Aorta (tissue), 5 donors: ENCODE measurements at regions of chr5 and their contacts with region 1.

Region 1: GRCh38 chr5:173972925-173973615 is 15.9 kb upstream of the C5orf47 start:
- DNase-seq: peak; percentile 86 to 92
- ATAC-seq: peak; percentile 93
- H3K4me3 ChIP-seq: peak overlapping the region; percentile 5 to 27
- H3K27ac ChIP-seq: no peak overlapping the region
- H3K4me1 ChIP-seq: peaks cover 0 to 1% of the 10 kb centered on the region in 2 donors
- H3K27me3 ChIP-seq: no peaks in the 10 kb centered on the region

Region 2: DNA sequence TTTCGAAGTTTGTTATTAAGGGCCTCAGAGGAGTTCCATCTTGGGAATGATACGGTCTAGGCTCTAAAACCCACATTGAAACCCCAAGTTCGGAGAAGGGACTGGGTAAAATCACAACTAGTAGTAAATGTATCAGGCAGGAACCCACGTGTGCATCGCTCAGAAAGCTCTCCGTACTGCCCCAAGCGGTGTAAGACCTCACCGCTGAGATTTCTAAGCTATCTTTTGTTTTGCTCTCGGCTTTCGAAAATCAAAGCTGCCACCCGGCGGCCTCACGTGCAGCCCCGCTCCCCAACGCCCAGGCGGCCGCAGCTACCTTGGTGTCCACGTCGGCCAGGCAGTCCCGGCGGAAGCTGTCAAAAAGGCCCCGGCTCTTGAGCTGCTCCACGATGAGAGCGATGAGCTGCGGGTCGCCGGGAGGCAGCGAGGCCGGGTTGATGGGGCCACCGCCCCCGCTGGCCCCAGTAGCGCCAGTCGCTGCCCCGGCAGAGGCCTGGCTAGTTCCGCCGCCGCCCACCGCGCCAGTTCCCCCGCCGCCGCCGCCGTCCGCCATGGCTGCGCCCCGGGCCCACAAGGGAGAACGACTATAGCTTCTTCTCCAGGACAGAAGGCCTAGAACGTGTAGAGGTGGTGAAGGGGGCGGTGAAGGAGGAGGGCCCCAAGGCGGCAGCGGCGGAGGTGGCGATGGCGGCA is 357.0 kb before region 1 on chr5:
- intact Hi-C with region 1: loop called (anchors 1 kb)
- DNase-seq: peak; percentile 63 to 82
- ATAC-seq: peak; percentile 79
- H3K4me3 ChIP-seq: peak overlapping the region; percentile 86 to 99
- H3K27ac ChIP-seq: peak overlapping the region; percentile 60 to 91
- H3K4me1 ChIP-seq: no peaks in the 10 kb centered on the region
- H3K27me3 ChIP-seq: no peaks in the 10 kb centered on the region

Region 3: DNA sequence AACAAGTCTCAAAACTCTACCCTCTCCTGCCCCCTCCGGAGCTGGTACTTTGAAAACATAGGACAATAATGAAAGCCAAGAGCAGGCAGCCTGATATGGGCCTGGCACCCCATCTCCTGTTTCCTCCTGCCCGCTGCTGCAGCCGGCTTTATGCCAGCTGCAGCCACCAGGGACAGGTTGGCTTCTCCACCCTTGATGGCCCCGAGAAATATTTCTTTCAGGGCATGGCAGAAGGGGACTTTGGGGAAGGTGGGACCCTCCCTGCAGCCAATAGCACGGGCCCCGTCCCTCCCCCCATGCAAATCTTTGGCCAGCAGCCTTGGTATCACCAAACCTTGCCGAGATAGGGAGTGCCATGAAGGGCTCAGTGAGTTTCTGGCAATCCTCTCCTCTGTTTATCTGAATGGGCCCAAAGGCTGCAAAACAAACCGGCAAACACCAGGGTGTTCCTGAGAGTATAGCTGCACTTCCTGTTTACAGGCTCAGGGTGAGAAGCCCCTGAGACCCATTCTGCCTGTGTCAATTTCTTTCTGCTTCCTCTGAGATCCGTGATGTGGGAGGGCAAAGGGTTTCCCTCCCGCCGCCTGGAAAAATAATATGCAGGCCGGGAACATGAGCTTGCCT is 283.2 kb before region 1 on chr5:
- intact Hi-C with region 1: no loop called
- DNase-seq: no peak
- ATAC-seq: no peak
- H3K4me3 ChIP-seq: no peak overlapping the region
- H3K27ac ChIP-seq: no peak overlapping the region
- H3K4me1 ChIP-seq: no peaks in the 10 kb centered on the region
- H3K27me3 ChIP-seq: no peaks in the 10 kb centered on the region

Region 4: DNA sequence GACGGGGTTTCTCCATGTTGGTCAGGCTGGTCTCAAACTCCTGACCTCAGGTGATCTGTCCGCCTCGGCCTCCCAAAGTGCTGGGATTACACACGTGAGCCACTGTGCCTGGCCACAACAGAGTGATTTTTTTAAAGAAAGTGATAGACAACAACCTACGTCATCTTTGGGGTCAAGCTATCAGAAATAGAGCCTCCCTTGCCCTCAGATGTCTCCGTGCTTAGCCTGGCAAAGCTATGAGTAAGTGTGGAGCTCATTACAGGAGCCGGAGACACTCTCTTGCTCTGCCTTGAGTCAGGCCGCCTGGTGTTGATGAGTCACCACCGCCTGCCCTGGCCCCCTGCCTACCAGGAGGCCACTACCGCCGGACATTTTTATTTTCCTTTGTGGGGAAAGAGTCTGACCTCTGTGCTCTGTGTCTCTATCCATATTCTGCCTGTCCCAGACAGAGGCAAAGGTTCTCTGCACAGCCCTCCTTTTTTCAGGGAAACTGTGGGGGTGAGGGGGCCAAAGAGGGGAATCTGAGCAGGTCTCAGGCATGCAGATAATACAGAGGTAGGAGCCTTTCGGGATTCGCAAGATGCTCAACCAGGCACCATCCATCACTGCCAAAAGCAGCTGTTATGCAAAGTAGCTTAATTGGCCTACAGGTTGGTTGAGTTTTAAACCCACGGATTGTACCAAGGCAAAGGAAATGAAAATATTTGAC is 208.6 kb before region 1 on chr5:
- intact Hi-C with region 1: loop called in 1 of 2 experiments (anchors 5 kb)
- DNase-seq: peak; percentile 92
- ATAC-seq: peak; percentile 74
- H3K4me3 ChIP-seq: no peak overlapping the region
- H3K27ac ChIP-seq: no peak overlapping the region
- H3K4me1 ChIP-seq: peaks cover 0 to 3% of the 10 kb centered on the region in 2 donors
- H3K27me3 ChIP-seq: no peaks in the 10 kb centered on the region

Region 5: GRCh38 chr5:173941758-173942401 is 31.2 kb before region 1 on chr5:
- intact Hi-C with region 1: no loop called
- DNase-seq: no peak
- ATAC-seq: no peak
- H3K4me3 ChIP-seq: no peak overlapping the region
- H3K27ac ChIP-seq: no peak overlapping the region
- H3K4me1 ChIP-seq: no peaks in the 10 kb centered on the region
- H3K27me3 ChIP-seq: no peaks in the 10 kb centered on the region

Region 6: GRCh38 chr5:174311531-174312269 is 338.6 kb after region 1 on chr5:
- intact Hi-C with region 1: loop called in 1 of 2 experiments (anchors 5 kb)
- DNase-seq: peak; percentile 78 to 92
- ATAC-seq: peak; percentile 78
- H3K4me3 ChIP-seq: peak overlapping the region in 1 of 2 donors; percentile 11
- H3K27ac ChIP-seq: no peak overlapping the region
- H3K4me1 ChIP-seq: no peaks in the 10 kb centered on the region
- H3K27me3 ChIP-seq: no peaks in the 10 kb centered on the region